Uterus (tissue), 4 donors: ENCODE measurements at regions of chr3 and their contacts with region 1.

Region 1: DNA sequence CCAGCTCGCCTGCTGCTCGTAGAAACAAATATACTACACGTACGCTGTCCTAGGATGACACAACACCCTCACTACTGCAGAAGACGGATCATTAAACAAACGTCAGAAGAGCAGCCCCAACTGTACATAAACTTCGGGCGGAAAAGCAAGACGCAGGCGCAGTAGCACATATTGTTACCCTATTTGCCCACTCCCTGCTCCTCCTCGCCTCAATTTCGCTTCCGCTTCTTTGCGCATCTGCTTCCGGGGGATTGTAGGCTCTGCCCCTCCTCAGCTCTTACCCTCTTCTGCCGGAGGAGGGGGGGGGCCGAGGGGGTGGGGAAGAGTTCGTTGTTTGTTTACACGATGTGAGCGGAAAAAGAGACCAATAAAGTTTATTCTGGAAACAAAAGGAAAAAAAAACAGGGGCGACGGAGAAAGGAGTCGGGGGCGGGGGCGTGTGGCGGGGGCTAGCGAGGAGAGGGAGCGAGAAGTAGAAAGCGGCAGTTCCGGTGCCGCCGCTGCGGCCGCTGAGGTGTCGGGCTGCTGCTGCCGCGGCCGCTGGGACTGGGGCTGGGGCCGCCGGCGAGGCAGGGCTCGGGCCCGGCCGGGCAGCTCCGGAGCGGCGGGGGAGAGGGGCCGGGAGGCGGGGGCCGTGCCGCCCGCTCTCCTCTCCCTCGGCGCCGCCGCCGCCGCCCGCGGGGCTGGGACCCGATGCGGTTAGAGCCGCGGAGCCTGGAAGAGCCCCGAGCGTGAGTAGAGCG is at the start of gene PIK3CA:
- DNase-seq: peak; percentile 93 to 97
- H3K4me3 ChIP-seq: peak within 1 kb of the TSS; percentile 67 to 88
- H3K27ac ChIP-seq: peak within 1 kb of the TSS; percentile 95 to 98
- H3K4me1 ChIP-seq: peaks cover 0 to 17% of the 10 kb centered on the region in 2 donors
- H3K27me3 ChIP-seq: no peaks in the 10 kb centered on the region
- CTCF ChIP-seq: peak in 1 of 4 experiments; percentile 8
- POLR2A ChIP-seq: peak; percentile 47 to 82
- total RNA-seq, gene PIK3CA: 12.6 to 65.2 (median 36.3) TPM

Region 2: GRCh38 chr3:179000144-179000543 is 147.9 kb before region 1 on chr3:
- intact Hi-C with region 1: no loop called
- DNase-seq: no peak
- H3K4me3 ChIP-seq: no peak overlapping the region
- H3K27ac ChIP-seq: no peak overlapping the region
- H3K4me1 ChIP-seq: no peaks in the 10 kb centered on the region
- H3K27me3 ChIP-seq: no peaks in the 10 kb centered on the region
- CTCF ChIP-seq: no peak
- POLR2A ChIP-seq: no peak

Region 3: DNA sequence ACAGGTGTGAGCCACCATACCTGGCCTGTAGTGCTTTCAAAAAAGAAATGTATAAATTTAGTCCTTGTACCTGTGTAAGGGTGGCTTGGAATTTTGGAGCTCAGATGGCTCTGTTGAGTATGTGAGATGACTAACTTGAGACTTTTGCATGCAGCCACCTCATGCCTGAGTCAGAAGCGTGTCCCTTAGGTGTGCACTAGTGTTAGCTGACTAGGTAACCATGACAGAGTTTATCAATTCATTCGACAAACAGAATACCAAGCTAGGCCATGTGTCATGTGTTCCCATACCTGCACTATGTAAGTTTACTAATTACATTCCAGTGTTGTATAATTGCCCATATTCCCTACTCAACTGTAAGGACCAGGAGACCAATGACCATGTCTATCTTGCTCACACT is 170.8 kb after region 1 on chr3:
- intact Hi-C with region 1: loop called (anchors 5 kb)
- DNase-seq: no peak
- H3K4me3 ChIP-seq: no peak overlapping the region
- H3K27ac ChIP-seq: no peak overlapping the region
- H3K4me1 ChIP-seq: no peaks in the 10 kb centered on the region
- H3K27me3 ChIP-seq: no peaks in the 10 kb centered on the region
- CTCF ChIP-seq: no peak
- POLR2A ChIP-seq: no peak